Activated CD8-positive, alpha-beta T cell treated with anti-CD3 and anti-CD28 coated beads, Interleukin-2, amount 10 ng/mL, durations not matched to agents 7 days and 5 days (primary cell): ENCODE measurements at regions of chr1 and their contacts with region 1.

Region 1: GRCh38 chr1:42924082-42924850 is 34.4 kb downstream of the SLC2A1 start:
- DNase-seq: peak; percentile 95
- ATAC-seq: peak; percentile 93
- H3K4me3 Mint-ChIP-seq: peak overlapping the region; percentile 90
- H3K27ac Mint-ChIP-seq: peak overlapping the region; percentile 95
- H3K4me1 Mint-ChIP-seq: peaks cover 60% of the 10 kb centered on the region
- H3K27me3 Mint-ChIP-seq: no peaks in the 10 kb centered on the region

Region 2: GRCh38 chr1:42846257-42847110 is 77.8 kb before region 1 on chr1 and contains the start of gene ZNF691:
- CTCF ChIA-PET with region 1: interaction called, 19 read pairs
- POLR2A ChIA-PET with region 1: no interaction called
- DNase-seq: peak; percentile 94
- ATAC-seq: peak; percentile 99
- H3K4me3 Mint-ChIP-seq: peak within 1 kb of the TSS; percentile 87
- H3K27ac Mint-ChIP-seq: peak within 1 kb of the TSS; percentile 80
- H3K4me1 Mint-ChIP-seq: peaks cover 30% of the 10 kb centered on the region
- H3K27me3 Mint-ChIP-seq: no peaks in the 10 kb centered on the region
- total RNA-seq, gene ZNF691: 8.0 to 8.9 TPM

Region 3: GRCh38 chr1:42936309-42937078 is 12.2 kb after region 1 on chr1:
- CTCF ChIA-PET with region 1: interaction called, 22 read pairs
- POLR2A ChIA-PET with region 1: interaction called, 6 read pairs
- DNase-seq: no peak
- ATAC-seq: no peak
- H3K4me3 Mint-ChIP-seq: peak overlapping the region; percentile 37
- H3K27ac Mint-ChIP-seq: peak overlapping the region; percentile 97
- H3K4me1 Mint-ChIP-seq: peaks cover 97% of the 10 kb centered on the region
- H3K27me3 Mint-ChIP-seq: no peaks in the 10 kb centered on the region

Region 4: GRCh38 chr1:42952303-42953001 is 28.2 kb after region 1 on chr1:
- CTCF ChIA-PET with region 1: interaction called, 86 read pairs
- POLR2A ChIA-PET with region 1: interaction called, 23 read pairs
- DNase-seq: peak; percentile 58
- ATAC-seq: peak; percentile 58
- H3K4me3 Mint-ChIP-seq: peak overlapping the region; percentile 49
- H3K27ac Mint-ChIP-seq: peak overlapping the region; percentile 78
- H3K4me1 Mint-ChIP-seq: peaks cover 88% of the 10 kb centered on the region
- H3K27me3 Mint-ChIP-seq: no peaks in the 10 kb centered on the region

Region 5: DNA sequence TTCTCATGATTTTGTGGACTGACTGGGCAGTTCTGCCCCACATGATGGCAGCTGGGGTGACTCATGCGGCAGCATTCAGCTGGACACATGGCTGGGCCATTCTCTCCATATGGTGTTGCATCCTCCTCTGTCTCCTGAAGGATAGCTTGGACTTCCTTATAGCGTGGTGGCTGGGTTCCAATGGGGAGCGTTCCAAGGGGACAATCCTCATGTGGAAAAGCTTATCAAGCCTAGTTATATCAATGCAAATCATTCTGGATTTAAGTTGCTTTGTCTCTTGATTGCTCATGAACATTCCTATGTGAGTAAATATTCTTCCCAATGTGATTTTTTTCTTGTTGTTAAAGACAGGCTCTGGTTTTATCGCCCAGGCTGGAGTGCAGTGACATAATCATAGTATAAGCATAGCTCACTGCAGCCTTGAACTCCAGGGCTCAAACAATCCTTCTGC is 47.6 kb after region 1 on chr1:
- CTCF ChIA-PET with region 1: interaction called, 10 read pairs
- POLR2A ChIA-PET with region 1: interaction called, 3 read pairs
- DNase-seq: no peak
- ATAC-seq: no peak
- H3K4me3 Mint-ChIP-seq: no peak overlapping the region
- H3K27ac Mint-ChIP-seq: no peak overlapping the region
- H3K4me1 Mint-ChIP-seq: no peaks in the 10 kb centered on the region
- H3K27me3 Mint-ChIP-seq: no peaks in the 10 kb centered on the region